ENCODE measurements at regions of chr3 and their contacts with region 1.

Region 1: DNA sequence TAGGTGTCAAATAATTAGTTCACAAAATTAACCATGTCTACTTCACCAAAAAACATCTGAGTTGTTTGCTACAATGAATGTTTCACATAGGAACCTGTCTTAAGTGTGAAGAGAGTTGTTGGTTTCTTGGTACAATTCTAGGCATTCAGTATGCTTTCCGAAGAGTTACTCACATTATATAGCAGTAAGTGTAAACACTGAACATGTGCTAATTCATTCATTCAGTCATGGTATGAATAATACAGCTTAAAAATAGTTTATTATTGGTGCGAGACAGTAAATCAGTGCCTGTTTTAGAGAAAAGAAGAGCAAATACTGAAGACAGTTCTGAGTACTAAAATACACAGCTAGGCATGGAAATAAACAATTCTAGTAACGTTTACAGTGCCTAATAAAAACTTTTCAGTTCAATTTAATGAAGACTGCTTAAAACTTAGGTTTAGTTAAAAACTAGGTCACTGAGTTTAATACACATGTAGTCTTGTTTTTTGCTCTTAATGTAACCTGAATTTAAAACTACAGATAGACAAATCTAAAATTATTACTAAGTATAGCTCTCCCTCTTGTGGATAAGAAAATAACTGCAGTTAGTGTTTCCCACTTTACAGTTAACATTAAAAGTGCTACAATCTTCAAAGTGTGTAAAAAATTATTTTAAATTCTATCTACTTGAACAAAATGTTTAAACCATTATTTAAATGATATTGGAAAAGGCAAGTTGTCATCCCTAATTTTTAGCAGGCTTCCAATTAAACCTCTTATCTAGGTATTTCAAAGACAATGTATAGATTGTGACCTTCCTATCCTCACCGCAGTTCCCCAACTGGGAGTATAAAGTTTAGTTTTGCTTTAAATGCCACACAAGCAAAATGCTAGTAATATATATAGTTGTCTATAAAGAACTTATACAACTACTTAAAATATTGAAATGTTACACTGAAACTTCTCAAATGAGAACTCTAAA is 20.1 kb upstream of the ZCWPW2 start:
- DNase-seq: peak in 3 of 4 experiments; percentile 17 to 34 (median 18)
- ATAC-seq: peak; percentile 72
- H3K4me3 ChIP-seq: no peak overlapping the region
- H3K27ac ChIP-seq: no peak overlapping the region
- H3K4me1 ChIP-seq: no peaks in the 10 kb centered on the region
- H3K27me3 ChIP-seq: no peaks in the 10 kb centered on the region
- CTCF ChIP-seq: peak in 2 of 3 experiments; percentile 16 to 79; a peak in 4 of 6 replicates
- EP300 ChIP-seq: no peak
- POLR2A ChIP-seq: no peak
- RAD21 ChIP-seq: peak; percentile 69 to 73

Region 2: GRCh38 chr3:27312044-27312668 is 1016.3 kb before region 1 on chr3:
- CTCF ChIA-PET with region 1: interaction called, 5 read pairs
- POLR2A ChIA-PET with region 1: no interaction called
- in situ Hi-C with region 1: no loop called
- intact Hi-C with region 1: loop called (anchors 10 kb)
- DNase-seq: peak; percentile 25 to 53 (median 48)
- ATAC-seq: peak; percentile 74
- H3K4me3 ChIP-seq: no peak overlapping the region
- H3K27ac ChIP-seq: no peak overlapping the region
- H3K4me1 ChIP-seq: no peaks in the 10 kb centered on the region
- H3K27me3 ChIP-seq: no peaks in the 10 kb centered on the region
- CTCF ChIP-seq: peak; percentile 19 to 63 (median 55); a peak in 5 of 6 replicates
- EP300 ChIP-seq: no peak
- POLR2A ChIP-seq: no peak
- RAD21 ChIP-seq: peak; percentile 57 to 68

Region 3: GRCh38 chr3:27712136-27713077 is 616.1 kb before region 1 on chr3:
- CTCF ChIA-PET with region 1: interaction called, 10 read pairs
- POLR2A ChIA-PET with region 1: no interaction called
- in situ Hi-C with region 1: loop called (anchors 10 kb)
- intact Hi-C with region 1: loop called (anchors 2 kb)
- DNase-seq: peak; percentile 57 to 71 (median 66)
- ATAC-seq: peak; percentile 97
- H3K4me3 ChIP-seq: no peak overlapping the region
- H3K27ac ChIP-seq: no peak overlapping the region
- H3K4me1 ChIP-seq: peaks cover 0 to 4% of the 10 kb centered on the region in 2 experiments; a peak in 1 of 5 replicates
- H3K27me3 ChIP-seq: peaks cover 12 to 31% of the 10 kb centered on the region in 2 experiments; a peak in 3 of 5 replicates
- CTCF ChIP-seq: peak; percentile 48 to 64 (median 60)
- EP300 ChIP-seq: no peak
- POLR2A ChIP-seq: no peak
- RAD21 ChIP-seq: peak; percentile 53 to 66

Region 4: GRCh38 chr3:28651159-28651558 is 322.7 kb after region 1 on chr3:
- CTCF ChIA-PET with region 1: no interaction called
- POLR2A ChIA-PET with region 1: no interaction called
- in situ Hi-C with region 1: no loop called
- intact Hi-C with region 1: no loop called
- DNase-seq: no peak
- ATAC-seq: no peak
- H3K4me3 ChIP-seq: no peak overlapping the region
- H3K27ac ChIP-seq: no peak overlapping the region
- H3K4me1 ChIP-seq: no peaks in the 10 kb centered on the region
- H3K27me3 ChIP-seq: no peaks in the 10 kb centered on the region
- CTCF ChIP-seq: no peak
- EP300 ChIP-seq: no peak
- POLR2A ChIP-seq: no peak
- RAD21 ChIP-seq: no peak